Prostate gland (tissue), 2 donors: ENCODE measurements at regions of chr6 and their contacts with region 1.

Region 1: GRCh38 chr6:94045099-94045829 is 625.9 kb upstream of the EPHA7 start:
- DNase-seq: no peak
- H3K4me3 ChIP-seq: no peak overlapping the region
- H3K27ac ChIP-seq: peak overlapping the region; percentile 4 to 49
- H3K4me1 ChIP-seq: peaks cover 3% of the 10 kb centered on the region
- H3K27me3 ChIP-seq: no peaks in the 10 kb centered on the region
- CTCF ChIP-seq: no peak
- POLR2A ChIP-seq: no peak

Region 2: GRCh38 chr6:93779086-93779841 is 266.0 kb before region 1 on chr6:
- intact Hi-C with region 1: loop called (anchors 10 kb)
- DNase-seq: no peak
- H3K4me3 ChIP-seq: no peak overlapping the region
- H3K27ac ChIP-seq: peak overlapping the region in 1 of 2 donors; percentile 19
- H3K4me1 ChIP-seq: no peaks in the 10 kb centered on the region
- H3K27me3 ChIP-seq: no peaks in the 10 kb centered on the region
- CTCF ChIP-seq: no peak
- POLR2A ChIP-seq: no peak

Region 3: GRCh38 chr6:94300424-94301144 is 255.3 kb after region 1 on chr6:
- intact Hi-C with region 1: no loop called
- DNase-seq: no peak
- H3K4me3 ChIP-seq: no peak overlapping the region
- H3K27ac ChIP-seq: no peak overlapping the region
- H3K4me1 ChIP-seq: no peaks in the 10 kb centered on the region
- H3K27me3 ChIP-seq: no peaks in the 10 kb centered on the region
- CTCF ChIP-seq: no peak
- POLR2A ChIP-seq: no peak